MCF 10A (cell line): ENCODE measurements at regions of chr5 and their contacts with region 1.

Region 1: GRCh38 chr5:154405078-154405792 is 40.6 kb upstream of the SAP30L start:
- DNase-seq: peak; percentile 85
- H3K4me3 Mint-ChIP-seq: peak overlapping the region; percentile 51
- H3K27ac Mint-ChIP-seq: no peak overlapping the region
- H3K4me1 Mint-ChIP-seq: peaks cover 7% of the 10 kb centered on the region
- H3K27me3 Mint-ChIP-seq: no peaks in the 10 kb centered on the region
- CTCF ChIP-seq: peak; percentile 98

Region 2: DNA sequence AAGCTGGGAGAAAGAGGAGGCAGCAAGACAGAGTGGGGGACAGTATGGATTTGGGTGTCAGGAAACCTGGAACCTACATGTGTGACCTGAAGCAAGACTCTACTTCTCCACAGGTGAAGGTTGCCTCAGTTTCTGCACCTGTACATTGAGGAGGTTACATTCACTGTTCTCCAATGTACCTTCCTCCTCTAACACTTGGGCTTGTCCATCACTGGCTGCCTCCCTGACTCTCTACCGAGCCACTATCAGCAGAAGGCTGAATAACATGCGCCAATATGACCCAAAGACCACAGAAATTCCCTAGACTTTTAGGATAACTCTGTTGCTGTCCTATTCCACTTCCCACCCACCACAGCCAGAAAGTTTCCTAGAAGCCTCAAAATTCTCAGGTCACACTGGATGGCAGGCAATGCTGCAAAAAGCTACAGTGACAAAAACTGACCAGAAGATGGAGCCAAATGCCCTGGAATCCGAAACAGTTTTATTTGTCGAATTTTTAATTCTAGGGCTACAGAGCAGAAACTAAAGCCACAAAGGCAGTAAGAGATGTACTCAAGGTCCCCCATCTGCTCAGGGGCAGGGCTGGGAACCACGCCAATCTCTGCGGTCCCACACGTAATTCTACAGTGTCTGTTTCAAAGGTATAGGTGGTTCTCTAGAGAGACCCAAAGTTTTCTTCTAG is 431.0 kb before region 1 on chr5:
- CTCF ChIA-PET with region 1: interaction called, 48 read pairs
- POLR2A ChIA-PET with region 1: no interaction called
- intact Hi-C with region 1: loop called (anchors 1 kb)
- DNase-seq: peak; percentile 68
- H3K4me3 Mint-ChIP-seq: no peak overlapping the region
- H3K27ac Mint-ChIP-seq: no peak overlapping the region
- H3K4me1 Mint-ChIP-seq: no peaks in the 10 kb centered on the region
- H3K27me3 Mint-ChIP-seq: peaks cover 21% of the 10 kb centered on the region
- CTCF ChIP-seq: peak; percentile 94

Region 3: GRCh38 chr5:154110716-154111115 is 294.5 kb before region 1 on chr5:
- CTCF ChIA-PET with region 1: interaction called, 10 read pairs
- POLR2A ChIA-PET with region 1: no interaction called
- intact Hi-C with region 1: no loop called
- DNase-seq: peak; percentile 11
- H3K4me3 Mint-ChIP-seq: no peak overlapping the region
- H3K27ac Mint-ChIP-seq: no peak overlapping the region
- H3K4me1 Mint-ChIP-seq: no peaks in the 10 kb centered on the region
- H3K27me3 Mint-ChIP-seq: peaks cover 12% of the 10 kb centered on the region
- CTCF ChIP-seq: no peak

Region 4: GRCh38 chr5:154133591-154133990 is 271.6 kb before region 1 on chr5:
- CTCF ChIA-PET with region 1: no interaction called
- POLR2A ChIA-PET with region 1: no interaction called
- intact Hi-C with region 1: no loop called
- DNase-seq: no peak
- H3K4me3 Mint-ChIP-seq: no peak overlapping the region
- H3K27ac Mint-ChIP-seq: no peak overlapping the region
- H3K4me1 Mint-ChIP-seq: no peaks in the 10 kb centered on the region
- H3K27me3 Mint-ChIP-seq: peaks cover 55% of the 10 kb centered on the region
- CTCF ChIP-seq: no peak

Region 5: GRCh38 chr5:154189819-154190594 is 215.2 kb before region 1 on chr5:
- CTCF ChIA-PET with region 1: interaction called, 198 read pairs
- POLR2A ChIA-PET with region 1: interaction called, 29 read pairs
- intact Hi-C with region 1: no loop called
- DNase-seq: peak; percentile 93
- H3K4me3 Mint-ChIP-seq: peak overlapping the region; percentile 81
- H3K27ac Mint-ChIP-seq: peak overlapping the region; percentile 15
- H3K4me1 Mint-ChIP-seq: peaks cover 44% of the 10 kb centered on the region
- H3K27me3 Mint-ChIP-seq: no peaks in the 10 kb centered on the region
- CTCF ChIP-seq: peak; percentile 56

Region 6: DNA sequence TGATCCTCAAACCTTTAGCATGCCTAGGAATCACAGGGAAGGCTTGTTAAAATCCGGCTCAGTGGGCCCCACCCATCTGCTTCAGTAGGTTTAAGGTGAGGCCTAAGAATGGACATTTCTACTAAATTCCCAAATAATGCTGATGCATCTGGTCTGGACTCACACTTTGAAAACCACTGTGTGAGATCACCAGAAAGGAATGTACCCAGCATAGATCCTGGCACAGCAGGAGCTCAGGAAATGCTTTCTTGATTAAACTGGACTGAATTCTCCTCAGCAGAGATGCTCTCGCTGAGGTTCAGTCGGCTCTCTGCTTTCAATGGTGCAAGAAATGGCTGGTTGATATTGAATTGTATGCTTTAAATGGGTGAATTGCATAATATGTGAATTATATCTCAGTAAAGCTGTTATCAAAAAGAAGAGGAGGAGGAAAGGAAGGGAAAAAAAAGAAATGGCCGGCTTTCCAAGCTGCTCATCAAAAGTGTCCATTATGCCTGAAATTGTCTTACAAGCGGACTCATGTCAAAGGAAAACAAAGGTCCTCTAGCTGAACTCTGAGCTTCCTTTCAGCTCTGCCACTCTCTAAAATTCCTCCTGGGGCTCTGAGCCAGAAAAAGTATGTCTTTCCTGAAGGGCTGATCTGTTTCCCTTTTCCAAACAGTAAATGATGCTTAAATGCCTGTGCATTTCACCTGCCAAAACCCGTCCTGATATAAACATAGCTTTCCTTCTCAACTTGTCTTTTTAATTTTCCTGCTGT is 37.0 kb before region 1 on chr5:
- CTCF ChIA-PET with region 1: interaction called, 23 read pairs
- POLR2A ChIA-PET with region 1: interaction called, 8 read pairs
- intact Hi-C with region 1: no loop called
- DNase-seq: peak; percentile 98
- H3K4me3 Mint-ChIP-seq: peak overlapping the region; percentile 42
- H3K27ac Mint-ChIP-seq: peak overlapping the region; percentile 84
- H3K4me1 Mint-ChIP-seq: peaks cover 63% of the 10 kb centered on the region
- H3K27me3 Mint-ChIP-seq: no peaks in the 10 kb centered on the region
- CTCF ChIP-seq: no peak

Region 7: DNA sequence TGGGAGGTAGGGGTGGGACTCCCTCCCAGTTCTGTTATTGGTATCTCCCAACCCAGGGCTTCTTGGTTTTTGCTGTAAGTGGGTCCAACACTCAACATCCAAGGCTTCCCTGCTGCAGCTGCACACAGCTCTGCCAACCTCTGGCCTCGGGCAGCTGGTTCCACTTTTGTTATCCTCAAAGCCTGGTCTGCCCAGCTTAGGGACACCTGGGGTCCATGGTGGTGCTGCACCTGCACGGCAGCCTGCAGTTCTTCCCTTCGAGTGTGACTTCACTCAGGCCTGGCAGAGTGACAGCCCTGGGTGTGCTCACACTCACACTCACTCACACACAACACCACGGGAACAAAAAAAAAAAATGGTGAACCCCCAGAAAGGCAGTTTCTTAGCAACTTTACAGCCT is 25.2 kb after region 1 on chr5:
- CTCF ChIA-PET with region 1: interaction called, 65 read pairs
- POLR2A ChIA-PET with region 1: no interaction called
- intact Hi-C with region 1: no loop called
- DNase-seq: no peak
- H3K4me3 Mint-ChIP-seq: no peak overlapping the region
- H3K27ac Mint-ChIP-seq: no peak overlapping the region
- H3K4me1 Mint-ChIP-seq: no peaks in the 10 kb centered on the region
- H3K27me3 Mint-ChIP-seq: no peaks in the 10 kb centered on the region
- CTCF ChIP-seq: no peak

Region 8: GRCh38 chr5:154583545-154584496 is 178.6 kb after region 1 on chr5:
- CTCF ChIA-PET with region 1: no interaction called
- POLR2A ChIA-PET with region 1: no interaction called
- intact Hi-C with region 1: no loop called
- DNase-seq: peak; percentile 88
- H3K4me3 Mint-ChIP-seq: peak overlapping the region; percentile 22
- H3K27ac Mint-ChIP-seq: peak overlapping the region; percentile 2
- H3K4me1 Mint-ChIP-seq: peaks cover 29% of the 10 kb centered on the region
- H3K27me3 Mint-ChIP-seq: no peaks in the 10 kb centered on the region
- CTCF ChIP-seq: no peak